ENCODE measurements at regions of chr1 and their contacts with region 1.

Region 1: GRCh38 chr1:28656335-28656734 is 7.9 kb downstream of the RNU11 start:
- DNase-seq: no peak
- H3K4me3 ChIP-seq: no peak overlapping the region
- H3K27ac ChIP-seq: no peak overlapping the region
- H3K4me1 ChIP-seq: no peaks in the 10 kb centered on the region
- H3K27me3 ChIP-seq: no peaks in the 10 kb centered on the region
- CTCF ChIP-seq: no peak

Region 2: GRCh38 chr1:28613175-28613574 is 43.2 kb before region 1 on chr1:
- CTCF ChIA-PET with region 1: no interaction called
- dilution Hi-C with region 1: no loop called
- in situ Hi-C with region 1: no loop called
- intact Hi-C with region 1: no loop called
- DNase-seq: no peak
- H3K4me3 ChIP-seq: no peak overlapping the region
- H3K27ac ChIP-seq: no peak overlapping the region
- H3K4me1 ChIP-seq: no peaks in the 10 kb centered on the region
- H3K27me3 ChIP-seq: no peaks in the 10 kb centered on the region
- CTCF ChIP-seq: no peak

Region 3: GRCh38 chr1:28718586-28719331 is 62.4 kb after region 1 on chr1:
- CTCF ChIA-PET with region 1: no interaction called
- dilution Hi-C with region 1: no loop called
- in situ Hi-C with region 1: no loop called
- intact Hi-C with region 1: no loop called
- DNase-seq: no peak
- H3K4me3 ChIP-seq: no peak overlapping the region
- H3K27ac ChIP-seq: no peak overlapping the region
- H3K4me1 ChIP-seq: no peaks in the 10 kb centered on the region
- H3K27me3 ChIP-seq: no peaks in the 10 kb centered on the region
- CTCF ChIP-seq: no peak

Region 4: GRCh38 chr1:28744184-28744583 is 87.8 kb after region 1 on chr1:
- CTCF ChIA-PET with region 1: no interaction called
- dilution Hi-C with region 1: loop called (anchors 5 kb)
- in situ Hi-C with region 1: no loop called
- intact Hi-C with region 1: no loop called
- DNase-seq: no peak
- H3K4me3 ChIP-seq: no peak overlapping the region
- H3K27ac ChIP-seq: no peak overlapping the region
- H3K4me1 ChIP-seq: peaks cover 12% of the 10 kb centered on the region
- H3K27me3 ChIP-seq: no peaks in the 10 kb centered on the region
- CTCF ChIP-seq: no peak

Region 5: DNA sequence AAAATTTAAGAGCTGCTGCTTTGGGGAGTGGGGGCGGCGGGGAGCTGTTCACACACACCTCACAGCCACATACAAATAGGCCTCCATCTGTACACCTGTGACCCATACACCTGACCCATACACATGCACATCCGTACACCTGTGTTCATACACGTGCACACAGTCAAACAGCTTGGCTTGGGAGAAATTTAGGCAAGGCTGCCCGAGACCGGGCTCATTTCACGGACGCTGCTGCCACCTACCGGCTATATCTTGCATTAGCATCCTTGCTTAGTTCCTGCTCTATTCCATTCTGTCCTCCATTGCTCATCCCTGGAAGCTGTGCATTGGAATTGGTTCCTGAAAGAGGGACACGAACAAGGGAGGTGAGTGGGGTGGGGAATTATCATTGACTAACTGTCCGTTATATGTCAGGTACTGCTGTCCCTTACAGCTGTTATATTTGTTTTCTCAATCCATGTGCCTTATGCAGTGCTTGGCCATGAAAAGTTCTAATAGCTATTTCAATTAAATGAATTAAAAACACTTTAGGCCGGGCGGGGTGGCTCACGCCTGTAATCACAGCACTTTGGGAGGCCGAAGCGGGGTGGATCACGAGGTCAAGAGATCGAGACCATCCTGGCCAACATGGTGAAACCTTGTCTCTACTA is 220.9 kb after region 1 on chr1:
- CTCF ChIA-PET with region 1: no interaction called
- dilution Hi-C with region 1: no loop called
- in situ Hi-C with region 1: loop called (anchors 10 to 25 kb)
- intact Hi-C with region 1: loop called (anchors 1 kb)
- DNase-seq: peak; percentile 72
- H3K4me3 ChIP-seq: no peak overlapping the region
- H3K27ac ChIP-seq: no peak overlapping the region
- H3K4me1 ChIP-seq: peaks cover 6% of the 10 kb centered on the region
- H3K27me3 ChIP-seq: no peaks in the 10 kb centered on the region
- CTCF ChIP-seq: peak; percentile 91 to 94

Measured in mammary epithelial cell (primary cell).